Activated CD4-positive, alpha-beta memory T cell treated with anti-CD3 and anti-CD28 coated beads for 36 hours (primary cell): ENCODE measurements at regions of chr13 and their contacts with region 1.

Region 1: DNA sequence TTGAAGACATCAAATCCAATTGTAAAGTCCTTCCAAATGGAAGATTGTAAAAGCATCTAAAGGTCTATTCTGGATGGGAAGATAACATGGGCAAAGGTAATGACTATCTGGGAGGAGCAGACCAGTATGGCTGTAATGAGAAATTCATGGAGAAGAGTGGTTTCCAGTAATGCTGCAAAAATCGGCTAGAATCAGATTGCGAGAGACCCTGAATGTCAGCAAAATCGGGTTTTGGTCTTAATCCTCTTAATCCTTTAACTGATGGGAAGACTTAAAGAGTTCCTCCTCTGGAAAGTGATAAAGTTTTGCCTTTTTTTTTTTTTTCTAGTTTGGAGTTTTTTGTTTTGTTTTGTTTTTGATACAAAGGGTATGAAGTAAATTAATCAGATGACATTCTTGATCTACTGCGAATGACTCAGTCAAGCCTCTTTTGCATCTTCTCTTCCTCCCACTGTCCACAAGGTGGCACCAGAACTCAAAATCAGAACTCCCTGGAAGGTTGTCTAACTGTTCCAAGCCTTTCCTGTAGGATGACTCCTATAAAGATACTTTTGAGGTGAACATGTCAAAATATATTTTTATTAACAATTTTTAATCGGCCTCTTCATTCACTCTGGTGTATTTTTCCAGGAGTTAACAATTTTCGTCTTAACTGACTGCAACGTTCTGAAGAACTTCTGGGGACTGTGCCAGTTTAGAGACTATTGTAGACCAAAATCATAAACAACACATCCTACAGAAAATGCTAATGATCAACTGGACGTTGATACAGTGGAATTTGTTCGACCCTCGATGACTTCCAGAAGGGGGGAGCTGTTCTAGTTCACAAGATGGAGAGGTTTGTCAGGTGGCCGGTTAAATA is 213.3 kb upstream of the MIR17HG start:
- DNase-seq: peak; percentile 30
- H3K4me3 Mint-ChIP-seq: no peak overlapping the region
- H3K27ac Mint-ChIP-seq: no peak overlapping the region
- H3K4me1 Mint-ChIP-seq: no peaks in the 10 kb centered on the region
- H3K27me3 Mint-ChIP-seq: no peaks in the 10 kb centered on the region

Region 2: DNA sequence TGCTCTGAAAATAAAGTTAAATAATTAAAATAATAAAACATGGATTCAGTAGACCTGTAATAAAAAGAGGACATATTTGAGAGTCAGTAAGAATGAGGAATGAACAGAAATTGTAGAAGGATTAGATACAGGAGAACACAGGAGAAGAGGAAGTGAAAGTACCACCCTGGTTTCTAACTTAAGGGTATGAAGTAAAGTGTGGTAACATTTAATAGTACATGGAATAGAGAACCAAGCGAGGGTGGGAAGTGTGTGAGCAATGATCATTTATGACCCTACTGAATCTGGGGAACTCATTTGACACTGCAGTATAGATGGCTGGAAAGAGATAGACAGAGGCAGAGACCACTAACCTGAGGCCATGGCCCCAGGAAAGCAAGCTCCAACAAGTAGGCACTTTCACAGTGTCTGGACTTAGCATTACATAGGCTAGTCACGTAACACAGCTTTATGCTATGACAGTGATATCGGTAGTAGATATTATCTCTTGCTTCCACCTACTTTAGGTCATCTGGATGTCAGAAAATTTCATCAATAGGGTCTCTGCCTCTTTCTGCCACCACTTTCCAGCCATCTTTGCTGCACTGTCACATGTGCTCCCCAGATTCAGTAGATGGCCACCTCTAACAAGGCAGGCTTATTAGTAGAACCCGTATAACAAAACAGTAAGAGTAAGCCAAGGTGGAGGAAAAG is 420.6 kb before region 1 on chr13:
- CTCF ChIA-PET with region 1: no interaction called
- POLR2A ChIA-PET with region 1: no interaction called
- intact Hi-C with region 1: no loop called
- DNase-seq: no peak
- H3K4me3 Mint-ChIP-seq: no peak overlapping the region
- H3K27ac Mint-ChIP-seq: no peak overlapping the region
- H3K4me1 Mint-ChIP-seq: no peaks in the 10 kb centered on the region
- H3K27me3 Mint-ChIP-seq: no peaks in the 10 kb centered on the region

Region 3: DNA sequence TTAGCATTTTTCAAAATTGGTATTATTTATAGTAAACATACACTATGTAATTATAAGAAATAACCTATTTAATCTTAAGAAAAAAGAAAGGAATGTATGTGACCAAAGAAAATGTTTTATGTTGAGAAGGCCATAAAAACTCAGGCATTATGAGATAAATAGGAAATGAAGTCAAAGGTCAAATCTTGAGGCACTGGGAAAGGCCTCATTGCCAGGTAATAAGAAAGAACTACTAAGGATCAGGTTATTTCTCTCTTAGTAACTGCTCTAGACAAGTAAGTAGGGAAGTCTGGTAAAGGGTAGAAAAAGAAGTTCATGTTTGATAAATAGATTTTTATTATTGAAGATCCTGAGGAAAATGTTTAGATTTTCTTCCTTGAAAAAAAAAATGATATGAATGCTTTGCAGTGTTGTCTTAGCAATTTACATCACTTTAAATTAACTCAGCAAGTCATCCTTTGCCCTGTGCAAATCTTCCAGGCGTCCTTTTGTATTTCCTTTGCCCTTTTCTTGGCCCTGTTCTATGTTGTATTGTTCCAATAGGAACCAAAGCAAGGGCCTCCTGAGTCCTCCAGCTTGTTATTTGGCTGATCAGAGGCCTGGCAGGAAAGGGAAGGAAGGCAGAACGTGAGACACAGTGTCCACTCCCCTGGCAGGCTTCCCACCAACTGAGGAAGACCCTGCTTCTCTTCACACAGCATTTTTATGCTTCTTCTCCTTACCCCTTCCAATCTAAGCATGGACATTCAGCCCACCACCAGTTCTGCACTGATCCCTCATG is 47.0 kb before region 1 on chr13:
- CTCF ChIA-PET with region 1: no interaction called
- POLR2A ChIA-PET with region 1: no interaction called
- intact Hi-C with region 1: no loop called
- DNase-seq: no peak
- H3K4me3 Mint-ChIP-seq: no peak overlapping the region
- H3K27ac Mint-ChIP-seq: no peak overlapping the region
- H3K4me1 Mint-ChIP-seq: no peaks in the 10 kb centered on the region
- H3K27me3 Mint-ChIP-seq: no peaks in the 10 kb centered on the region

Region 4: GRCh38 chr13:91123456-91124127 is 10.6 kb before region 1 on chr13:
- CTCF ChIA-PET with region 1: no interaction called
- POLR2A ChIA-PET with region 1: no interaction called
- intact Hi-C with region 1: no loop called
- DNase-seq: no peak
- H3K4me3 Mint-ChIP-seq: no peak overlapping the region
- H3K27ac Mint-ChIP-seq: no peak overlapping the region
- H3K4me1 Mint-ChIP-seq: no peaks in the 10 kb centered on the region
- H3K27me3 Mint-ChIP-seq: peaks cover 7% of the 10 kb centered on the region

Region 5: DNA sequence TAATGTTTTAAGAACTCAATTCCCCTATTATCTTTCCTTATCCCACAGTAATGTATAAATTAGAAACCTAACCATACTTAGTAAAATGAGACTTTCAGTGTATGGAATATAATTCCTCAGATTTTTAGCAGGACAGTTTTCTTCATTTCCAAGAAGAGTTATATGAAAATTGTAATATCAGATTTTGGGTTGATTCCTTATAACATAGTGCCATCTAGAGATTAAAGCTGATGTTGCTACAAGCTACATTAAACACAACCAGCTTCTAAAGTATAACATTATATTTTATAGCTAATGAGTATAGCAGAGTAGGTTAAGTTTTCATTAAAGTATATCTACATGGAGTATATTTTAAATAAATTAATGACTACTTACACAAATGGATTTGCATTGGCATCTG is 113.6 kb after region 1 on chr13:
- CTCF ChIA-PET with region 1: interaction called, 17 read pairs
- POLR2A ChIA-PET with region 1: no interaction called
- intact Hi-C with region 1: loop called (anchors 1 kb)
- DNase-seq: no peak
- H3K4me3 Mint-ChIP-seq: no peak overlapping the region
- H3K27ac Mint-ChIP-seq: no peak overlapping the region
- H3K4me1 Mint-ChIP-seq: no peaks in the 10 kb centered on the region
- H3K27me3 Mint-ChIP-seq: peaks cover 9% of the 10 kb centered on the region

Region 6: GRCh38 chr13:91375116-91375729 is 241.1 kb after region 1 on chr13:
- CTCF ChIA-PET with region 1: no interaction called
- POLR2A ChIA-PET with region 1: no interaction called
- intact Hi-C with region 1: loop called (anchors 10 kb)
- DNase-seq: no peak
- H3K4me3 Mint-ChIP-seq: no peak overlapping the region
- H3K27ac Mint-ChIP-seq: no peak overlapping the region
- H3K4me1 Mint-ChIP-seq: peaks cover 3% of the 10 kb centered on the region
- H3K27me3 Mint-ChIP-seq: peaks cover 2% of the 10 kb centered on the region

Region 7: DNA sequence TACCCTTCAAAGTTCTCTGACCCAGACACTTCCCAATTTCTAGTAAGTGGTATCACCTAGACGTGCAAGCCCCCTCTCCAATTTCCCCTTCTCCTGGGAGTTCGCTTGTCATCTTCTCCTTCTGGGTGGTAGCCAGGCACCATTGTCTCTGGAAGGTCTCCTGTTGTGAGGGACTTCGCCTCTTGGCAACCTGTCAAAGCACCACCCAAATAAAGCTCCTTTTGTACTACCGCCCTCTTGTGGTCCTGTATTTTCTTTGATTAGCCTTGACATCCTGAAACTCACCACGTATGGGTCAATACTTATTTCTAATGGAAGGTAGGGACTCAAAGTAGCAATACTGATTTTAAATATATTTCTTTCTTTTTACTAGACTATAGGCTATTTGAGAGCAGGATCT is 272.4 kb after region 1 on chr13:
- CTCF ChIA-PET with region 1: interaction called, 5 read pairs
- POLR2A ChIA-PET with region 1: no interaction called
- intact Hi-C with region 1: loop called (anchors 1 kb)
- DNase-seq: peak; percentile 21
- H3K4me3 Mint-ChIP-seq: no peak overlapping the region
- H3K27ac Mint-ChIP-seq: no peak overlapping the region
- H3K4me1 Mint-ChIP-seq: no peaks in the 10 kb centered on the region
- H3K27me3 Mint-ChIP-seq: peaks cover 11% of the 10 kb centered on the region

Region 8: DNA sequence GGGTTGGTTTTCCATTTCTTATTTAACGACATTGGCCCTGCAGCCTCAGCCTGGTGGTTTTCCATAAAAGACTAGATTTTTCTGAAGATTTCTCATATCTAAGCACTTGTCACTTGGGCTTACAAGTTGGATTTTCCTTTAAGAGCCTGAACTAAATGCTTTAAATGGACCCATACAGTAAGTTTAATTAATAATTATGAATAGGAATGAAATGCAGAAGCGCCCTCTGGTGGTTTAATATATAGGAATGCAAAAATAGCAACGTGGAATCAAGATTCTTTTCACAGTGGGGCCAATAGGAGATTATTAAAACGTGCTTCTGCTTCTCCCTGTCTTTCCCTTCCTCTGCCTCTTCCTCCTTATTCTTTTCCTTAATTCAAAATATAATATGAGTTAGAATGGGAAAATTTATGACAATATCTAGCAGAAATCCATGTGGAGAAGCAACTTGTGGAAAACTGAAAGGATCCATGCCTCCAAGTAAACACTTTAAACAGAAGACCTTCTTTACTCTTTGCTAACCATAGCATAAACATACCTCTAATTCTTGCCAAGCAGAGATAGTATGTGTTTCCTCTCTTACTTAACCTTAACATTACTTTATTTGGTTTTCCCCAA is 588.2 kb after region 1 on chr13:
- CTCF ChIA-PET with region 1: interaction called, 11 read pairs
- POLR2A ChIA-PET with region 1: no interaction called
- intact Hi-C with region 1: loop called (anchors 1 kb)
- DNase-seq: no peak
- H3K4me3 Mint-ChIP-seq: no peak overlapping the region
- H3K27ac Mint-ChIP-seq: no peak overlapping the region
- H3K4me1 Mint-ChIP-seq: no peaks in the 10 kb centered on the region
- H3K27me3 Mint-ChIP-seq: no peaks in the 10 kb centered on the region